Activated CD4-positive, alpha-beta memory T cell treated with anti-CD3 and anti-CD28 coated beads for 36 hours (primary cell): ENCODE measurements at regions of chr5 and their contacts with region 1.

Region 1: DNA sequence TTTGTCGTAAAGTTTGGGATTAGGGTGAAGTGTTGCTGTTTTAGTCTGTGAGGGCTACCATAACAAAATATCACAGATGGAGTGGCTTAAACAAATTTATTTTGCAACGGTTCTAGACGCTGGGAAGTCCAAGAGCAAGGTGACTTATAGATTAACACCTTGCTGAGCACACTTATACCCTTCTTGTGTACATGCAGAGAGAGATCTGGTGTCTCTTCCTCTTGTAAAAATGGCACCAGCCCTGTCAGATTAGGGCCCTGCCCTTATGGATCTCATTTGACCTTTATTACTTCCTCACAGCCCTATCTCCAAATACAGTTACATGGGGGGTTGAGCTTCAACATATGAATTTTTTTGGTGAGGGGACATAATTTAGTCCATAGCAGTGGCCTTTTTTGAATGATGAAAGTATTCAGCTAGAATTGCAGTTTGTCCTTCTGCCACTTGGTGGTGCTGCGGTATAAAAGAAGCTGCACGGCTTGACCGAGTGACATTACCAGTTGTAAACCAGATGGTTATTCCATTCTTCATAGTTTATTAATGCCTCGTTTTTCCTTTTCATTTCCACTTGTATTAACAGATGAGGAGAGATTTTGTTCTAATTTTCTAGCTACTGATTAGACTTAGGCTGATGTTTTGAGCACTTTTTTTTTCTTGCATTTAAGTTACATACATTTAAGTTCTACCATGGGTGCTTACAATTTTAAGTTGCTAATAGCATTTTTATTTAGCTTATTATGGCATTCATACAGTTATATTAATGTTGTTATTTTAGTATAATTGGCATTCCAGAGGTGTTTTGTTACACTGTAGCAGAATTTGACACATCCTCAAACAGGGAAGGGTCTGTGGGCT is 19.4 kb downstream of the DCP2 start:
- DNase-seq: peak; percentile 83
- H3K4me3 Mint-ChIP-seq: no peak overlapping the region
- H3K27ac Mint-ChIP-seq: no peak overlapping the region
- H3K4me1 Mint-ChIP-seq: peaks cover 23% of the 10 kb centered on the region
- H3K27me3 Mint-ChIP-seq: no peaks in the 10 kb centered on the region

Region 2: GRCh38 chr5:112976432-112977309 is 19.3 kb before region 1 on chr5 and contains the start of gene DCP2:
- CTCF ChIA-PET with region 1: interaction called, 33 read pairs
- POLR2A ChIA-PET with region 1: no interaction called
- intact Hi-C with region 1: no loop called
- DNase-seq: peak; percentile 97
- H3K4me3 Mint-ChIP-seq: peak within 1 kb of the TSS; percentile 85
- H3K27ac Mint-ChIP-seq: peak within 1 kb of the TSS; percentile 98
- H3K4me1 Mint-ChIP-seq: peaks cover 39% of the 10 kb centered on the region
- H3K27me3 Mint-ChIP-seq: no peaks in the 10 kb centered on the region
- total RNA-seq, gene DCP2: 102 TPM

Region 3: DNA sequence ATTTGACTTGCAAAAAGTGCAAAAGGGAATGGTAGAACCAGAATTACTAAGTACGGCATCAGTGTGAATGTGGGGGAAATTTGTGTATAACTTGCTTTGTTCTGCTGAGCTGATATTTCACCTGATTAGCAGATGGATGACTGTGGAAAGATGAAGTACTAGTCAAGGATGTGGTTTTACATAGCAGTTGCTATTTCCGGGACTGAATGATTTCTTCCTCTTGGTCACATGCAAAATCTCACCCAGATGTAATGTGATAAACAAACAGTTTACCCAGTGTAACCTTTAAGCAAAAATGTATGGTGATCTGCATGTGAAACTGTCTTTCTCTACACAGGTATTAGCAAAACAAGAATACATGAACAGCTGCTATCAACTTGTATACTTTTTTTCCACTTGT is 26.7 kb after region 1 on chr5:
- CTCF ChIA-PET with region 1: interaction called, 14 read pairs
- POLR2A ChIA-PET with region 1: no interaction called
- intact Hi-C with region 1: no loop called
- DNase-seq: no peak
- H3K4me3 Mint-ChIP-seq: no peak overlapping the region
- H3K27ac Mint-ChIP-seq: peak overlapping the region; percentile 77
- H3K4me1 Mint-ChIP-seq: peaks cover 68% of the 10 kb centered on the region
- H3K27me3 Mint-ChIP-seq: no peaks in the 10 kb centered on the region

Region 4: GRCh38 chr5:113294311-113295110 is 298.5 kb after region 1 on chr5:
- CTCF ChIA-PET with region 1: interaction called, 20 read pairs
- POLR2A ChIA-PET with region 1: no interaction called
- intact Hi-C with region 1: no loop called
- DNase-seq: peak; percentile 88
- H3K4me3 Mint-ChIP-seq: peak overlapping the region; percentile 89
- H3K27ac Mint-ChIP-seq: peak overlapping the region; percentile 55
- H3K4me1 Mint-ChIP-seq: peaks cover 16% of the 10 kb centered on the region
- H3K27me3 Mint-ChIP-seq: peaks cover 13% of the 10 kb centered on the region

Region 5: DNA sequence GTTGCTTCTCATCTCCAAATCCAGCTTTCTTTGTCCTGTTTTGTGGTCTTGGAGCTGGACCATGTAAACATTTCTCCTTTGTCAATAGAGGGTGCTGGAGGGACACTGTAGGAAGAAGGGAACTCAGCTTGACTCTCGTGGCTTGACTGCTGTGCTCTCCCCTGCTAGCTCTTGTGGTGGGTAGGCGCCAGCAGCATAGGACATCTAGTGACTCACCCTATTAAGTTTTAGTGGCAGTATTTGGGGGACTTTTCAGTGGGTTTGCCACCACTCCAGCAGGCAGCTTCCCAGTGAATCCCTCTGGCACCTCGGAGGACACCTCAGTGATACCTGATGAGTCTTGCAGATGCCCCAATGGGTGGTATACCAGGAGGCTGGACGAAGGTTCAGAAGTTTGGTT is 341.0 kb after region 1 on chr5:
- CTCF ChIA-PET with region 1: interaction called, 51 read pairs
- POLR2A ChIA-PET with region 1: no interaction called
- intact Hi-C with region 1: no loop called
- DNase-seq: no peak
- H3K4me3 Mint-ChIP-seq: no peak overlapping the region
- H3K27ac Mint-ChIP-seq: no peak overlapping the region
- H3K4me1 Mint-ChIP-seq: peaks cover 4% of the 10 kb centered on the region
- H3K27me3 Mint-ChIP-seq: no peaks in the 10 kb centered on the region

Region 6: GRCh38 chr5:113425914-113426313 is 429.9 kb after region 1 on chr5:
- CTCF ChIA-PET with region 1: no interaction called
- POLR2A ChIA-PET with region 1: no interaction called
- intact Hi-C with region 1: no loop called
- DNase-seq: no peak
- H3K4me3 Mint-ChIP-seq: no peak overlapping the region
- H3K27ac Mint-ChIP-seq: no peak overlapping the region
- H3K4me1 Mint-ChIP-seq: no peaks in the 10 kb centered on the region
- H3K27me3 Mint-ChIP-seq: no peaks in the 10 kb centered on the region

Region 7: DNA sequence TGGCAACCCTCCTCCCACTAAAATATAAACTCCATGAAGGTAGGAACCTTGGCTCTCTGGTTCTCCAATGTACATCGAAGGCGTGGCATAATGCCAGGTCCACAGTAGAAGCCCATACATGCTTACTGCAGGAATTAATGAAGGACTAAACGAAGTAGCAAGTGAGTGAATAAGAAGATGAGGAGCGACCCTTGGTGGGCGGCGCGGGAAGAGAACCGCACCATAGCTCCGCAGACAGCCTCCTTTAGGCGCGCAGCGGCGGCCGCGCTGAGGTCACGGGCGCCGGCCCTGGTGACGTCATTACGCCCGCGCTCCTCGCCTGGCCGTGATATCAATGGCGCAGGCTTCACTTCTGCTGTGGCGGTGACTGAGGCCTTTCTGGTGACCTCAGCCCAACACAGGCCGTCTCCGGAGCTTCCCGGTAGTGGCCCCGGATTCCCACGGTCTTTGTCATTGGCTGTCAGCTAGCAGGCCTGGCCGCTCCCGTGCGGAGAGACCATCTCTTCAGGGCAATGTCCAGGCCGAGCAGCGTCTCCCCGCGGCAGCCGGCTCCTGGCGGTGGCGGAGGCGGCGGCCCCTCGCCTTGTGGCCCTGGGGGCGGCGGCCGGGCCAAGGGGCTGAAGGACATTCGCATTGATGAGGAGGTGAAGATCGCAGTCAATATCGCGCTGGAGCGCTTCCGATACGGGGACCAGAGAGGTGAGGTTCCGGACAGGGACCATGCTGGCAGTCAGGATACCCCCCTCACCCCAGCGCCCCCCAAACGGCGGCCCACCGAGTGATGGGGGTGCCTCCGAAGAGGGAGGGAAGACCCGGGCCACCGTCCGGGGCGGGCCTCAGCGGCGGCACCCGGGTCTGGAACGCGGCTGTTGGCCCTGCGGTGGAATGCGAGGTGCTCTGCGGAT is 517.6 kb after region 1 on chr5 and contains the start of gene YTHDC2:
- CTCF ChIA-PET with region 1: interaction called, 21 read pairs
- POLR2A ChIA-PET with region 1: no interaction called
- intact Hi-C with region 1: loop called (anchors 5 kb)
- DNase-seq: peak; percentile 93
- H3K4me3 Mint-ChIP-seq: peak within 1 kb of the TSS; percentile 90
- H3K27ac Mint-ChIP-seq: peak within 1 kb of the TSS; percentile 79
- H3K4me1 Mint-ChIP-seq: peaks cover 28% of the 10 kb centered on the region
- H3K27me3 Mint-ChIP-seq: peaks cover 7% of the 10 kb centered on the region
- total RNA-seq, gene YTHDC2: 27.3 to 28.9 TPM